Activated CD4-positive, alpha-beta T cell treated with anti-CD3 and anti-CD28 coated beads, Interleukin-2, amount 10 ng/mL, durations not matched to agents 7 days and 5 days (primary cell): ENCODE measurements at regions of chr7 and their contacts with region 1.

Region 1: GRCh38 chr7:134986363-134987251 is at the start of gene AGBL3:
- DNase-seq: peak; percentile 95
- H3K4me3 Mint-ChIP-seq: peak within 1 kb of the TSS; percentile 91
- H3K27ac Mint-ChIP-seq: peak within 1 kb of the TSS; percentile 93
- H3K4me1 Mint-ChIP-seq: peaks cover 36% of the 10 kb centered on the region
- H3K27me3 Mint-ChIP-seq: no peaks in the 10 kb centered on the region
- total RNA-seq, gene AGBL3: 1.9 TPM

Region 2: GRCh38 chr7:135158874-135159273 is 172.3 kb after region 1 on chr7:
- CTCF ChIA-PET with region 1: interaction called, 12 read pairs
- POLR2A ChIA-PET with region 1: no interaction called
- DNase-seq: no peak
- H3K4me3 Mint-ChIP-seq: no peak overlapping the region
- H3K27ac Mint-ChIP-seq: no peak overlapping the region
- H3K4me1 Mint-ChIP-seq: peaks cover 44% of the 10 kb centered on the region
- H3K27me3 Mint-ChIP-seq: no peaks in the 10 kb centered on the region